ENCODE measurements at regions of chr18 and their contacts with region 1.

Region 1: GRCh38 chr18:65287652-65288051 is 463.2 kb upstream of the CDH7 start:
- DNase-seq: no peak
- ATAC-seq: no peak
- H3K4me3 ChIP-seq: no peak overlapping the region
- H3K27ac ChIP-seq: no peak overlapping the region
- H3K4me1 ChIP-seq: no peaks in the 10 kb centered on the region
- H3K27me3 ChIP-seq: no peaks in the 10 kb centered on the region
- CTCF ChIP-seq: no peak
- EP300 ChIP-seq: no peak
- POLR2A ChIP-seq: no peak
- RAD21 ChIP-seq: no peak

Region 2: DNA sequence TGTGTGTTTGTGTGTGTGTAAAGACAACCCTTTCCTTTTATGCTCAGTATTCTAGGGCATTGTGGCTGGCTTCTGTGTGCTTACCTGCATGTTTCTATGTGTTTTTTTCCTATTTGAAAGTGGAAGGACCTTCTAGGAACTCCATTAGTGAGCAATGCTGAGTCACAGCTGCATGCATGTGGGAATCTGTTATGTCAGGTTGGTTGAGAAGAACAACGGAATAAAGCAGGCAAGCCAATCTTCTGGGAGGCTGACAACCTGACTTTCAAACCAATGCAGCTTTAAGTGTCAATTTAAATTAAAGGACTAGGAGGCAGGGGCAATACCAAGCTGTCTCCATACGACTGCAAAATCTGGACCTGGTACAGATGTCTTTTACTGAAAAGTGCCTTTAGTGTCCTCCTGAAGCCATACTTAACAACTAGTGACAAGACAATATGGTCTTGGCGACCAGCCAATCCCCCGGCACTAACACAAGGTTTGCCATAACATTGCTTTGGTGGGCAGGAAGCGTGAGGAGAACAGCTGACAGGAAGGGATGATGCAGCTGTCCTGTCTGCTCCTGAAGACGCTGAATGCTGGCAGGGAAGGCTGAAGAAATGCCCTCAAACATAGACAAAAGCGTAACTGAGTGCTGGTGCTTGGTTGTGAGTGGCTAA is 51.6 kb before region 1 on chr18:
- CTCF ChIA-PET with region 1: no interaction called
- POLR2A ChIA-PET with region 1: no interaction called
- RAD21 ChIA-PET with region 1: no interaction called
- SMC1A ChIA-PET with region 1: no interaction called
- in situ Hi-C with region 1: no loop called
- intact Hi-C with region 1: no loop called
- DNase-seq: no peak
- ATAC-seq: no peak
- H3K4me3 ChIP-seq: no peak overlapping the region
- H3K27ac ChIP-seq: no peak overlapping the region
- H3K4me1 ChIP-seq: no peaks in the 10 kb centered on the region
- H3K27me3 ChIP-seq: no peaks in the 10 kb centered on the region
- CTCF ChIP-seq: no peak
- EP300 ChIP-seq: no peak
- POLR2A ChIP-seq: no peak
- RAD21 ChIP-seq: no peak

Region 3: GRCh38 chr18:65380986-65381385 is 93.3 kb after region 1 on chr18:
- CTCF ChIA-PET with region 1: no interaction called
- POLR2A ChIA-PET with region 1: no interaction called
- RAD21 ChIA-PET with region 1: no interaction called
- SMC1A ChIA-PET with region 1: no interaction called
- in situ Hi-C with region 1: loop called (anchors 25 kb)
- intact Hi-C with region 1: no loop called
- DNase-seq: no peak
- ATAC-seq: no peak
- H3K4me3 ChIP-seq: no peak overlapping the region
- H3K27ac ChIP-seq: no peak overlapping the region
- H3K4me1 ChIP-seq: no peaks in the 10 kb centered on the region
- H3K27me3 ChIP-seq: no peaks in the 10 kb centered on the region
- CTCF ChIP-seq: no peak
- EP300 ChIP-seq: no peak
- POLR2A ChIP-seq: no peak
- RAD21 ChIP-seq: no peak

Region 4: GRCh38 chr18:65439188-65439587 is 151.5 kb after region 1 on chr18:
- CTCF ChIA-PET with region 1: no interaction called
- POLR2A ChIA-PET with region 1: no interaction called
- RAD21 ChIA-PET with region 1: no interaction called
- SMC1A ChIA-PET with region 1: no interaction called
- in situ Hi-C with region 1: no loop called
- intact Hi-C with region 1: no loop called
- DNase-seq: no peak
- ATAC-seq: 0 out of 3 replicates have a peak, but pooled peaks have one; percentile 27
- H3K4me3 ChIP-seq: no peak overlapping the region
- H3K27ac ChIP-seq: no peak overlapping the region
- H3K4me1 ChIP-seq: no peaks in the 10 kb centered on the region
- H3K27me3 ChIP-seq: no peaks in the 10 kb centered on the region
- CTCF ChIP-seq: peak in 1 of 3 experiments; percentile 16; a peak in 1 of 6 replicates
- EP300 ChIP-seq: no peak
- POLR2A ChIP-seq: no peak
- RAD21 ChIP-seq: no peak

Region 5: DNA sequence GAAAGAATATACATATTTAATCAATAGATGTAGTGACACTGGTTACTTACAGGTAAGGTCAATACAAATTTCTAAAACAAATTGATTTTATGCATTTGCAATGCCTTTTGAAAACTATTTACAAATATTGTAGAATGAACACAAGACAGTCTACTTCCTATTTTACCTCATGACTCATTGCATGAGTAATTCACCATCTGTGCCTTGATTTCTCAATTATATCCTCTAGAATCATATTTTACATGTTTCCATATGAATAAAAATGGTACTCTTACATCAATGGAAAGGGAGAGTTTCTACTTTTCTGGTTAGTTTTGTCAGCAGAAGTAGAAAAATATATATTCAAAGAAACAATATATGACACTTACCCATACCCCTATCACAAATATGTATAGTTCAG is 259.4 kb after region 1 on chr18:
- CTCF ChIA-PET with region 1: no interaction called
- POLR2A ChIA-PET with region 1: no interaction called
- RAD21 ChIA-PET with region 1: no interaction called
- SMC1A ChIA-PET with region 1: no interaction called
- in situ Hi-C with region 1: no loop called
- intact Hi-C with region 1: no loop called
- DNase-seq: no peak
- ATAC-seq: no peak
- H3K4me3 ChIP-seq: no peak overlapping the region
- H3K27ac ChIP-seq: no peak overlapping the region
- H3K4me1 ChIP-seq: no peaks in the 10 kb centered on the region
- H3K27me3 ChIP-seq: no peaks in the 10 kb centered on the region
- CTCF ChIP-seq: no peak
- EP300 ChIP-seq: no peak
- POLR2A ChIP-seq: no peak
- RAD21 ChIP-seq: no peak